Left colon (tissue), 2 donors: ENCODE measurements at regions of chr16 and their contacts with region 1.

Region 1: GRCh38 chr16:50368410-50369132 is at the start of gene BRD7:
- DNase-seq: peak in 1 of 2 donors; percentile 66
- ATAC-seq: peak; percentile 88
- total RNA-seq, gene BRD7: 54.3 to 54.5 TPM

Region 2: GRCh38 chr16:50024684-50025536 is 343.7 kb before region 1 on chr16 and contains the start of gene CNEP1R1:
- intact Hi-C with region 1: loop called in 1 of 2 experiments (anchors 10 kb)
- DNase-seq: peak; percentile 94 to 95
- ATAC-seq: peak; percentile 99
- total RNA-seq, gene CNEP1R1: 17.8 to 19.2 TPM

Region 3: DNA sequence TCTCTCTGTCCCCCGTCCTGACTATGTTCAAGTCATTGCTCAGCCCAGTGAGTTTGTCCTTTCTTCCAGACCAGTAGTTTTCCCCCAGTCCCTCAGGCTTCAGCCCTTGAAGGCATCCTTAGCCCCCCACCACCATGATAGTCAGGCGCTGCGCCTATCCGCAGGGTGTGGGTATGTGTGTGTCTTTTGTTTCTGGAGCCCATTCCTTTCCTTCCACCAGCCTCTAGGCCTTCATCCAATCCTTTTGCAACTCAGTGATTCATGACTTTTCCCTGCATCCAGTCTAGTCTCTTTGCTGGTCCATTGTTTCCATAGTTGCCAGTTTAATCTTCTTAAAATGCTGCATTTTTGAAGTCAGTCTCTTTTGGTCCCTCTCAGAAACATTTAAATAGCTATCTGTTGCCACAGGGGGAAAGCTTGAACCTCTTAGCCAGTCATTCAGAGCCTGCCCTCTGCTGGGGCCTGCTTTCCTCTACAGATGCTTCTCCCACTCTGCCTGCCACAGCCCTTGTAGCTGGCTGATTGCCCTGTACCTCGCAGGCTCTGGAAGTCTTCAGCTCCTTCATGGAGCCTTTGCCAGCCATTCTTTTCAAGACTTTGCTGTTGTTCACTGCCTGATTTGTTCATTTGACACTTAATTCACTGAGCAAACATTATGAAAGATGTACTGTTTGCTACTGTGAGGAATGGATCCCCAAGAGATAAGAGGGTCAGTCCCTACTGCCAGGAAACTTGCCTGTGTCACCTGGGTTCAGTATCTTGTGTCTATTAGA is 158.1 kb before region 1 on chr16:
- intact Hi-C with region 1: loop called in 1 of 2 experiments (anchors 10 kb)
- DNase-seq: peak; percentile 80 to 84
- ATAC-seq: peak; percentile 82

Region 4: DNA sequence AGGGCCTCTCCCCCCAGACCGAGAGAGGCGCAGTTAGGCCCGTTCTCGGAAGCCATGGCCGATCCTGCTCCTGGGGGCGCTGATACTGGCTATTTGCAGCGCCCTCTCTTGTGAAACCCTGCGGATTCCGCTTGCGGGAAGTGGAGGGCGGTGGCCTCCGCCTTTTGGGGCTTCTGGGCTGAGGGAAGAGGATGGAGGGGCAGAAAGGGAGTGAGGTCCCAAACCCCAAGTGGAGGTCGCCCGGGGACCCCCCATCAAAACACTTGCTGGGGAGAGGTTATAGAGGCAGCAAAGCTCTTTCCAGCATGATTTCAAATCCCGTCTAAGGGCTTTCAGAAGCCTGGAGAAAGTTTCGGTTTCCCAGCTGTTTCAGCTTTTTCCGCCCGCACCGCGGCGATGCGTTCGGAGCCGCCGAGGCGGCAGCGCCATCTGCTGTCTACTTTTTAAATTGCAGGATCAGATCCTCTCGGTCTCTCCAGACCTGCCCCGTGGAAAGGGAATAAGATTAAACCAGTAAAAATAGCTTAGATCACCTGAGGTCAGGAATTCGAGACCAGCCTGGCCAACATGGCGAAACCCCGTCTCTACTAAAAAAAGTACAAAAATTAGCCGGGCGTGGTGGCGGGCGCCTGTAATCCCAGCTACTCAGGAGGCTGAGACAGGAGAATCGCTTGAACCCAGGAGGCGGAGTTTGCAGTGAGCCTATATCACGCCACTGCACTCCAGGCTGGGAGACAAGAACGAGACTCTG is 296.7 kb after region 1 on chr16:
- intact Hi-C with region 1: loop called (anchors 5 to 10 kb)
- DNase-seq: peak; percentile 53 to 85
- ATAC-seq: peak; percentile 84